PC-9 (cell line): ENCODE measurements at regions of chr17 and their contacts with region 1.

Region 1: DNA sequence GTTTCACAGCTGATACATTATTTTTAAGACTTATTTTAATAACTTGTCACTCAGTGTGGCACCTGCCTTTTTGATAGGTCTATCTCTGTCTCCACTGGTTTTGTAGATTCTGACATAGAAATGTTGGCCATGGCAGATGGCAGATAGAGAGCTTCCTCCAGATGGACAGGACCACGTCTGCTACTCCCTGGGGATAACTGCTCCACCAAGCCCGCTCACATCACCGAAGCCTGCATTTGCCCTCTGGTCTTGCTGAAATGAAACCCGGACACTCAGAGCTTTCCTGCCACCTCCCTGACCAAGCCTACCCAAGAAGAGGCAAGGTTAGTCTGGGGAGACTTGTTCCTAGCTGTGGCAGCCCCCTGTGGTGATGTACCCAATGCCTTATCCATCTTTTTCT is 16.4 kb upstream of the HAP1 start:
- DNase-seq: no peak
- H3K4me3 ChIP-seq: no peak overlapping the region
- H3K27ac ChIP-seq: no peak overlapping the region
- H3K4me1 ChIP-seq: no peaks in the 10 kb centered on the region
- H3K27me3 ChIP-seq: no peaks in the 10 kb centered on the region
- CTCF ChIP-seq: no peak

Region 2: GRCh38 chr17:41777574-41778188 is 26.8 kb after region 1 on chr17:
- CTCF ChIA-PET with region 1: no interaction called
- POLR2A ChIA-PET with region 1: interaction called, 39 read pairs
- intact Hi-C with region 1: no loop called
- DNase-seq: peak; percentile 51 to 58
- H3K4me3 ChIP-seq: no peak overlapping the region
- H3K27ac ChIP-seq: peak overlapping the region; percentile 49
- H3K4me1 ChIP-seq: peaks cover 56% of the 10 kb centered on the region
- H3K27me3 ChIP-seq: no peaks in the 10 kb centered on the region
- CTCF ChIP-seq: no peak

Region 3: DNA sequence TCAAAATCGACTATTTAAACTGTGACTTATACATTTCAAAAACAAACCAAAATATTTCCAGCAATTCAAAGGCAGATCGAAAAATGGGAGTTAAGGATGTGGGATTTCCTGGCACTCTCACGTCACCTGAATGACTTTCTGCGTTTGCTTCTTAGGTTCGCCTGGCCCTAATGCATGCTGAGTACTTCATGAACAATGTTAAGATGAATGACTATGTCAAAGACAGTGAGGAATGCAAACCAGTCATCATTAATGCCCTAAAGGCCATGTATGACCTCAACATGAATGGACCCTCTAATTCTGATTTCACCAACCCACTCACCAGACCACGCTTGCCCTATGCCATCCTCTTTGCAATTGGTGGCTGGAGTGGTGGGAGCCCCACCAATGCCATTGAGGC is 94.1 kb after region 1 on chr17:
- CTCF ChIA-PET with region 1: interaction called, 10 read pairs
- POLR2A ChIA-PET with region 1: no interaction called
- intact Hi-C with region 1: no loop called
- DNase-seq: no peak
- H3K4me3 ChIP-seq: no peak overlapping the region
- H3K27ac ChIP-seq: no peak overlapping the region
- H3K4me1 ChIP-seq: no peaks in the 10 kb centered on the region
- H3K27me3 ChIP-seq: no peaks in the 10 kb centered on the region
- CTCF ChIP-seq: no peak

Region 4: GRCh38 chr17:41910701-41911391 is 160.0 kb after region 1 on chr17:
- CTCF ChIA-PET with region 1: no interaction called
- POLR2A ChIA-PET with region 1: no interaction called
- intact Hi-C with region 1: no loop called
- DNase-seq: no peak
- H3K4me3 ChIP-seq: no peak overlapping the region
- H3K27ac ChIP-seq: no peak overlapping the region
- H3K4me1 ChIP-seq: peaks cover 10% of the 10 kb centered on the region
- H3K27me3 ChIP-seq: no peaks in the 10 kb centered on the region
- CTCF ChIP-seq: no peak

Region 5: DNA sequence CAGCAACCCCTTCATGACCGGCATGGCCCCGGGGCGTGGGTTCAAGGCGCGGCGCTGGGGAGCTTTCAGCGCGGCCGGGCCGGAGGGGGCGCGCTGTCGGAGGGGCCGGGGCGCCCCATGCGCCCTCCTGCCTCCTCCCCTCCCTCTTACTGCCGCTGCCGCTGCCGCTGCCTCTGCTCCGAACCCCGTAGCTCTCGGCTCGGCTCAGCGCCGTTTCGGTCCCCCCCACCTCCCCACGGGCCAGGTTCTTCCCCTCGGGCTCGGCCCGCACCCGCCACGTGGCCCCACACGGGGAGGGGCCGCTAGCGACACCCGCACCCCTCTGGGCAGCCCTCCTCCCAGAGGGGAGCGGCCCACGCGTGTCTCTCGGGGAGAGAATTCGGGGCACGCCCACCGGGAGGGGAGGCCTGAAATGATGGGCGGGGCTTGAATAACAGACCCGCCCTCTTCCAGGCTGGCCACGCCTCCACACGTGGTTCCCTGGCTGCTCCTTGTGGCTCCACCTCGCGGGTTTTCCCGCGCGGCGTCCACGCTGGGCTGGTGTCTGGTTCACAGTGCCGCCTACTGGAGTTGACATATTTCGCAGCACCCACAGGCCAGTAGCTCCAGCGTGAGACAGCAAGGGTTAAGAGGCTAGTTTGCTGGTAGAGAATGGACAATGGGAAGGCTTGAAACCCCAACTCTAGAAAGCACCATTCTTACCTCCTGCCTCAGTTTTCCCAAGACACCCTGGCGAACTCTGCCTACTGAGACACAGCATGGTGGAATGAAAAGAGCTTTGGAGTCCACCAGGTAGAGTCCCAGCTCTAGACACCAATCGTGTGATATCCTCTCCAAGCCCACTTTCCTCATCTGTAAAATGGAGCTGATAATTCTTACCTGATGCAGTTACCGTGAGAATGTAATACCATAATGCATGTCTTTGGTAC is 430.3 kb after region 1 on chr17 and contains the start of gene KCNH4:
- CTCF ChIA-PET with region 1: no interaction called
- POLR2A ChIA-PET with region 1: no interaction called
- intact Hi-C with region 1: no loop called
- DNase-seq: no peak
- H3K4me3 ChIP-seq: no peak within 1 kb of the TSS
- H3K27ac ChIP-seq: no peak within 1 kb of the TSS
- H3K4me1 ChIP-seq: peaks cover 19% of the 10 kb centered on the region; the same call in 1 of the 2 replicates
- H3K27me3 ChIP-seq: peaks cover 22% of the 10 kb centered on the region
- CTCF ChIP-seq: no peak
- total RNA-seq, gene KCNH4: not detected in 2 replicates